AG04450 (cell line): ENCODE measurements at regions of chr2 and their contacts with region 1.

Region 1: GRCh38 chr2:151238527-151239487 is 22.9 kb downstream of the RBM43 start:
- DNase-seq: peak; percentile 74
- H3K4me3 ChIP-seq: no peak overlapping the region
- H3K27ac ChIP-seq: no peak overlapping the region
- H3K27me3 ChIP-seq: no peaks in the 10 kb centered on the region
- CTCF ChIP-seq: peak; percentile 86

Region 2: DNA sequence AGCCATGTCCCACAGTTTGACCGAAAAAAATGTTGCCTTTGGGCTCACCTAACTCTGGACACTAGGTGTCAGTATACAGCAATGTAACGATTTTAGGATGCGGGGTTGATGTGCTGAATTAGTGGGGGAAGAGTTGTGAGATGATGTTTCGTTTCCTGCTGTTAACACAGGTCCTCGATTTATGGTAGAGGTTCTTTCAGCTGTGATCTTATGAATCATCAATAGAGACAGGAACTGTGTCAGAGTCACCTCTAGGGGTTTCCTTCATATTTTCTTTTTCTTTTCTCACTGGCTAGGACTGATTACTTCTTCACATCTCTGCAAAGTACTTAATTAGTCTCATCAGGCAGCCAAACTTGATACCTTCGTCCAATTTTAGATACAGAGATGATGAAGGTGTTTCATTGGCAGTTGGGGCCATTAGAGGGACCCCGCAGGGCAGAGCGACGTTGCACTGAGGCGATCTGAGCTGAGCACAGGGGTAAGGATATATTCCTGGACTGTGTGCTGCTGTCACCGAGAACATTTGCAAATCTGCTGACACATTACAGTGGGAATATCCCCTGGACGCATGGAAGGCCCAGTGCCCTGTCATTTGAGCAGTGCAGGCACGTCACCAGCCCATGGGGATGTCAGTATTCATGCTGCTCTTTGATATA is 1641.0 kb before region 1 on chr2:
- CTCF ChIA-PET with region 1: interaction called, 18 read pairs
- POLR2A ChIA-PET with region 1: no interaction called
- DNase-seq: peak; percentile 84
- H3K4me3 ChIP-seq: peak overlapping the region; percentile 33
- H3K27ac ChIP-seq: peak overlapping the region; percentile 4
- H3K27me3 ChIP-seq: no peaks in the 10 kb centered on the region
- CTCF ChIP-seq: peak; percentile 84

Region 3: DNA sequence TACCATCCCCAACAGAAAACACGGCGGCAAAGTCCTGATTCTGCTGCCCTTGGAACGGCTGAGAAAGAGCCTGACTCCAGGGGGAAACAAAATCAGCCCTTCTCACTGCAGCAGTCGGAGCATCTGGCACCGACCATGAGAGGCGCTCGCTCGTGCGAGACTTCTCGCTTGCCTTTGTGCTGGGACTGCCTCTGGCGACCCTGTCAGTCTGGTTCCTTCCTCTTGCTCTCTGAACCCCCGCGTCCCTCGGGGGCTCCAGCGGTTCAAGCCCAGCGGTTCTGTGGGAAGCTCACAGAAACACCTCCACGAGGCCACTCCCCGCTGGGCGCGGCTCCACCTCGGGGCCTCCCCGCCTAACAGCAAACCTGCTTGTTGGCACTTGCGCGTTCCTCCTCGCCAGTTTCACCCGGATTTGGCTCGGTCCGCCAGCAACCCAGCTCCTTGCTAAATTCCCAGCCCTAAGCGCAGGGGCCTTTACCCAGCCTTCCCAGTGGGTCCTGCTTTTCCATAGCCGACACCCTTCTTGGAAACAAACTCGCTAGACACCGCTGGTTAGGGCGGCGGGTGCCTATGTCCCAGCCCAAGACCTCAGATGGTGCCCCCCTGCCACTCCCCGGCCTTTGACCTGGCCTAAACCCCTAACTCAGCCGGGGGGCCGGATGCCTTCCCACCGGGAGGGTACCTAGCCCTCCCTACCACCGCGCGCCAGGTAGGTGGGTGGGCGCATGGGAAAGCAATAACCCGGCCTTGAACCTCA is 753.5 kb before region 1 on chr2:
- CTCF ChIA-PET with region 1: interaction called, 14 read pairs
- POLR2A ChIA-PET with region 1: interaction called, 13 read pairs
- DNase-seq: no peak
- H3K4me3 ChIP-seq: peak overlapping the region; percentile 94
- H3K27ac ChIP-seq: peak overlapping the region; percentile 96
- H3K27me3 ChIP-seq: no peaks in the 10 kb centered on the region
- CTCF ChIP-seq: peak; percentile 25

Region 4: GRCh38 chr2:150601280-150602038 is 637.3 kb before region 1 on chr2:
- CTCF ChIA-PET with region 1: interaction called, 21 read pairs
- POLR2A ChIA-PET with region 1: no interaction called
- DNase-seq: no peak
- H3K4me3 ChIP-seq: no peak overlapping the region
- H3K27ac ChIP-seq: peak overlapping the region; percentile 68
- H3K27me3 ChIP-seq: no peaks in the 10 kb centered on the region
- CTCF ChIP-seq: no peak

Region 5: DNA sequence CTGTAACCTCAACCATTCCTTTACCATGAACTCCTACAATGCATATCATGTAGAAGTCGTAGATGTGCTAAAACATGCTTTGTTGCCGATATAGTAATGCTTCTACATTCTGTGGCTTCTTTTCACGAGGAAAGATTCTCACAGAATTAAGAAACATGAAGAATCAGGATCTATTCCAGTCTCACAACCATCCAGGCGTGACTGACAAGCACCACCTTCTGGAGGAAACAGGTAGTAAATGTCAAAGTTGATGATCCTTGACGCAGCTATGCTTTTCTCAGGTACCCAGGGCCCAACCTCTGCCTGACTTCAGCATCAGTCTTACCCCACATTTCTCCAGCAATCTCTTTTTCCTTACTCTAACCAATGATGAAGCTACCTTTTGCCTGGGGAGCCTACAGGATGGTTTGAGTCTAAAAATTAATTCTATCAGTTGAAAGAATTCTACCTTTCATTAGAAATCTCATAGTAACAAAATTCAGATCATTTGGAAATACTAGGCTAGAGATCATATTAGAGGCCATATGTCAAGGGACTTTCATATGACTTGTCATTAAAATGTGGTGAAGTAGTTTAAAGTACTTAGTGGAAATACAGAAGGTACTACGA is 628.0 kb before region 1 on chr2:
- CTCF ChIA-PET with region 1: interaction called, 10 read pairs
- POLR2A ChIA-PET with region 1: no interaction called
- DNase-seq: no peak
- H3K4me3 ChIP-seq: no peak overlapping the region
- H3K27ac ChIP-seq: no peak overlapping the region
- H3K27me3 ChIP-seq: no peaks in the 10 kb centered on the region
- CTCF ChIP-seq: peak; percentile 65

Region 6: DNA sequence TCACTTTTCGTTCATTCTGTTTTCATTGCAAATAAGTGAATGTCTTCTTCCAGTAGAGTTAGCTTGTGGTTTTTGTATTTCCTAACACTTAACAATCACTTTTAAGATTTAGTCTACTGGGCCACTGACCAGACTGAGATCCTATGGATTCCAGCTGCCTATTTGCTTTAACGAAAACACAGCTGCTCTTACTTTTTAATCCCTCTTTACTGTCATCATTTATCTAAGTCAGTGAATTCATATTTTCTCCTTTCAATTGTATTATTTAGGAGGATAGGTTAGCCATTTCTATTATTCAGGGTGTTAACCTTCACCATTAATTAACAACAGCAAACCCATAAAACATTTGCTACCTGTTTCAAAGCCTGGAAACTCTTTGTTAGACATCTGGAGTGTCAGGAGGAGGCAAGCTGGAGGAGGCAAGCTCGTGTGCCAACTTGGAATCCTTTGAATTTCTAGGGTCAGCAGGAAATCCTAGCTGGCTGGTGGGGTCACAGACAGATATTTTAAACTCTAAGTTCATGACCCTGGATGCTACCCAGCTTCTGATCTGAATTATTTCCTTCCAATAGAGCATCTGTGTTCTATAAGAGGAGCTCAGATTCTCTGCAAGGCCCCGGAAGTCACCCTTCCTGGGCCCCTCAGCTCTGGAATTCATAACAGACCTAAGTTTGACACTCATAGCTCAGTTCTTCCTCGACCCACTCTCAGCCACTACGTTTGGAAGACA is 362.4 kb before region 1 on chr2:
- CTCF ChIA-PET with region 1: interaction called, 12 read pairs
- POLR2A ChIA-PET with region 1: interaction called, 3 read pairs
- DNase-seq: peak; percentile 57
- H3K4me3 ChIP-seq: no peak overlapping the region
- H3K27ac ChIP-seq: no peak overlapping the region
- H3K27me3 ChIP-seq: no peaks in the 10 kb centered on the region
- CTCF ChIP-seq: no peak

Region 7: DNA sequence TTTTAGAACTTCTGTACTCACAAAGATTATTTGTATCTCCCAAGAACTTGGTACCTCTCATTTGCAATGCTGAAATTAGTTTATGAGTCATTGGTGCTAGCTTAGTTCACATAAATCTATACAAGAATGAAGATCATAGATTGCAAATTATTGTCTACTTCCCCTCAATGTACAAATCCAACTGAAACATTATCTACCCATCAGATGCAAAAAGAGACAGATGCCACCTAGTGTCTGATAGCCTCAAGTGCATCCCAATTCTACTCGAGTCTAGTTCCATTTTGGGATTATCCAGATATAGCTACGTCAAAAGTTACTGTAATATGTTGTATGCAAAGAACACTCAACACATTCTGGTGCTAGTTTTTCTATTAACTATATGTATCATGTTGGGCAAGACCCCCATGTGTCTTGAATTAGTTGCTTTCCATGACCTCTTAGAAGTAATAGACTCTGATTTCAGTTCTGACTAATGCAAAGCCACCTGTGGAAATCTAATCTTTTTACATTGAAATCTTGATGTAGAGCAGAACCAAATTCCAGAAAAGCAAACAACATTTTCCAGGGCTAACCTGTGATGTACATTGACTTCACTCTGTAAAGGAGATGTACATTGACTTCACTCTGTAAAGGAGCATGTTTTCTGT is 187.1 kb before region 1 on chr2:
- CTCF ChIA-PET with region 1: interaction called, 11 read pairs
- POLR2A ChIA-PET with region 1: no interaction called
- DNase-seq: no peak
- H3K4me3 ChIP-seq: no peak overlapping the region
- H3K27ac ChIP-seq: no peak overlapping the region
- H3K27me3 ChIP-seq: no peaks in the 10 kb centered on the region
- CTCF ChIP-seq: peak; percentile 77